ENCODE measurements at regions of chr15 and their contacts with region 1.

Region 1: DNA sequence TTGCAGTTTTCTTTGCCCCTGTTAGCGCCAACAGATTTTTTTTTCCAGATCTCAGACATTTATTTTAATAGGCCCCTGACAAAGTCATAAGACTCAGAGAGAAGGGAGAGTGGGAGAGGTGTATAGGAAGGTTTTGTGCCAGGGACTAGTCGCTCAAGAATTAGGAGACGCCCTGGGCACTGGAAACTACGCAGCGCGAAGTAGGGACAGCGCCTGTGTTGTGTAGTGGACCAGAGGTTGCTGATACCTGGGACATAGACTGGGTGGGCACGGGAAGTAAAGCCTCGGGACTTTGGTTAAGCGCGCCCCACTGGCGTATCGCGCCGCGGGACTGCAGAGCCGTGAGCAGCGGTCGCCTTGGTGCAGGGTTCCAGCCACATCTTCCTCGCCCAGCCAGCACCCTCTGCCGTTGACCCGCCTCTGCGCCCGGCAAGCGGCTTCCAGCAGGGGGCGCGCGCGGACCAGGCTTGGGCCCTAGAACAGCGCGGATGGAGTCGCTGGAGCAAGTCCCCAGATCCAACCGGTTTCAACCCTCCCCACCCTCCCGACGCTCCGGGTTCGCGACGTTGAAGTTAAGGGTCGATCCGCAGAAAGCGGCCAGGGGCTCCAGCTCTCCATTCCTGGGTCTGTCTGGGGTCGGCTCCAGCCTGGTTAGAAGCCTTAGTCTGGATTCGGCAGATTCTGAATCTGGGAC is 3.0 kb upstream of the ISLR2 start:
- DNase-seq: no peak
- H3K4me3 ChIP-seq: peak overlapping the region; percentile 49 to 64 (median 51)
- H3K27ac ChIP-seq: peak overlapping the region; percentile 44 to 66 (median 50)
- H3K4me1 ChIP-seq: peaks cover 35 to 45% (median 42%) of the 10 kb centered on the region in 4 donors
- H3K27me3 ChIP-seq: peaks cover 0 to 95% (median 49%) of the 10 kb centered on the region in 4 donors
- CTCF ChIP-seq: peak; percentile 96 to 99 (median 99)
- EP300 ChIP-seq: no peak
- POLR2A ChIP-seq: no peak

Region 2: DNA sequence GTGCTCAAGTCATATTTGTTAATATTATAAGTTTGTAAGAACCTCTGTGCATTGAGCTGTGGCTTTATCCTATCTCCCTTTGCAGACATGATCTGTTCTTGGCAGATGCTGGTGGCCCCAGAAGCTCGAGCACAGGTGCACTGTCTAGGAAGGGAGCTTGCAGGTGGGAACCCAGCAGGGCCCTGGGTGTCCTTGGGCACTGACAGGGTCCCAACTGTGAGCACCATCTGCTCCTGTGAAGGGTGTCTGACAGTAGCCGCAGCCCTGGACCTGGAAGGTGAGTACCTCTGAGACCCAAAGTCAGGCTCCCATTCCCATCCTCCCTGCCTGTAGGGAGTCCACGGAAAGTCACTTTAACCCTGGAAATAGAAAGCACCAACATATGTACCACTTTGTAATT is 686.8 kb before region 1 on chr15:
- intact Hi-C with region 1: no loop called
- DNase-seq: no peak
- H3K4me3 ChIP-seq: no peak overlapping the region
- H3K27ac ChIP-seq: no peak overlapping the region
- H3K4me1 ChIP-seq: no peaks in the 10 kb centered on the region
- H3K27me3 ChIP-seq: peaks cover 0 to 22% (median 0%) of the 10 kb centered on the region in 4 donors
- CTCF ChIP-seq: no peak
- EP300 ChIP-seq: no peak
- POLR2A ChIP-seq: no peak

Region 3: DNA sequence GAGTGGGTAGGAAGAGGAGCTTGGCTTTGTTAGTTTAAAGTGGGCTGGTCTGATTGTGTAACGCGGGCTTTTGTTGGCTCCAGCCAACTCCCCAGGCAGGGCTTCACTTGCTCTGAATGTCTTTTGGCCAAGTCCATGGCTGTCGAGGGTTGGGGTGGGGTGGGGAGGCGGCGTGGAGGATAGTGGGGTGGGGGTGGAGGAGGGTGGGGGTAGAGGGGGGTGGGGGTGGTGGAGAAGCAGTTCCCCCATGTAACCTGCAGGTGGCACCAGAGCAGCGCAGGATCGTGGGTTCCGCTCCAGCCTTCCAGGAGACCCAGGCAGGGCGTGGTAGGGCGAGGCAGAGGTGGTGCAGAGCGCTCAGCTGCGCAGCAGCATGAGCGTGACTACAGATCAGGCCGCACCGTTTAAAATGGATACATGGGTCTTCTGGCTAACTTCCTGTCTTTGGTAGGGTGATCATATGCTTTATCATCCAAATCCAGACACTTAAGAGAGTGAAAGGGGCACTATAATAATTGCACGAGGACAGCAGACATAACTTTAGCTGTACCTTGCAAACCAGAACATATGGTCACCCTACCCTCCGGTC is 73.4 kb before region 1 on chr15:
- intact Hi-C with region 1: loop called (anchors 5 kb)
- DNase-seq: peak; percentile 94
- H3K4me3 ChIP-seq: peak overlapping the region in 2 of 4 donors; percentile 13 to 31
- H3K27ac ChIP-seq: peak overlapping the region in 2 of 4 donors; percentile 30 to 41
- H3K4me1 ChIP-seq: peaks cover 19 to 46% (median 44%) of the 10 kb centered on the region in 4 donors
- H3K27me3 ChIP-seq: no peaks in the 10 kb centered on the region
- CTCF ChIP-seq: peak; percentile 49 to 91 (median 74)
- EP300 ChIP-seq: no peak
- POLR2A ChIP-seq: no peak

Region 4: DNA sequence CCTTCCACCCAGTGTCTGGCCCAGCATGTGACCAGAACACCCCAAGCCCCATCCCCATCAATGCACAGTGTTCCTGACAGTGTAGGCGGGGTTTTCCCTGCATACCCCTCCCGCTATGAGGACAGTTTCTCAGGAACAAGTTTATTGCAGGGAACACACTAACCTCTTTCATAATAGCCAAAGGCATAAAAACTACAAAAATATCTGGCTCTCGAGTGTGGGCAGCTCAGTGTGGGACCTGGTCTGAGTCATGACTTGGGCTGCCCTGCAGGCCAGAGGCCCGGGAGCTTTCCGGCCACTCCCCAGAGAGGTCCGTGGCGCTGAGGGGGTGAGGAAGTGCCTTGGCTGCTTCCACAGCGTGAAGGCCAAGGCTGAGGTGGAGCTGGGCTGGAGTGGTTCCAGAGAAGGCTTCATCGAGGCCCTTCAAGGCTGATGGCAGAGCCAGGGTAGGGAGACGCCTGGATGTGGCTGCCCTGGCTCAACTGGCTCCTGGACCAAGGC is 52.0 kb after region 1 on chr15:
- intact Hi-C with region 1: no loop called
- DNase-seq: no peak
- H3K4me3 ChIP-seq: no peak overlapping the region
- H3K27ac ChIP-seq: peak overlapping the region; percentile 37 to 64 (median 52)
- H3K4me1 ChIP-seq: peaks cover 43 to 69% (median 64%) of the 10 kb centered on the region in 4 donors
- H3K27me3 ChIP-seq: no peaks in the 10 kb centered on the region
- CTCF ChIP-seq: no peak
- EP300 ChIP-seq: no peak
- POLR2A ChIP-seq: no peak

Region 5: DNA sequence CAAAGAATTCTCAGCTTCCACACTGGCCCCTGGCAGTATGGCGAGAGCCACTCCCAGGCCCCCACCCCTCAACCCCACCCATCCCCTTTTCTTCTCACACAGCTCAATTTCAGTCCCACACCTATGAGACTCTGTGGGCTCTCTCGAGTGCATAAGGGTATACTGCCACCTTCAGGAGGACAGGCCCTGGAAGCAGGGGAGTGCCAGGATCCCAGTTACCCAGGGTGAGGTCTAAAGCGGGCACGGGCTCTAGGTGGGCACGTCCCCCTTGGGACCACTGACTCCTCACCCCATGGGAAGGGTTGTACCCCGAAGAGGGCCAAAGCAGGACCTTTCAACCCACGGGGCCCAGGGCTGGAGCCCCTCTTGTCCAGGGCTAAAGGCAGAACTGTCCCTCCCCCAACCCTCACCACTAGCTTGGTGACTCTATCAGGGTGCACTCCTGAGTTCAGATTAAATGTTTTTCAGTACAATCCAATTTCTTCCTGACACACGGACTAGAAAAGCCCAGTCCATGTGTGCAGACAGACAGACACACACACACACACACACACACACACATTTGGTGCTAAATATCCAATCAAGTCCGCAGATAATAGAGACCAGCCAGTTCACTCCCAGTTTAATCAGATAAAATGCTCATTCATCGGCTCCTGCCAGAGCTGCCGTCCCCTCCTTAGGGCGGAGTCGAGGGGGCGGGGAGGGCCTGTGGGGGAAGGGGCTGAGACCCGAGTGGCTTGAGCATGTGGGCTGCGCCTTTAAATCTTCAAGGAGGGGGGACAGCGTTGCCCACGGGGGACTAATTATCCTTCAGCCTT is 180.6 kb after region 1 on chr15:
- intact Hi-C with region 1: loop called (anchors 10 kb)
- DNase-seq: no peak
- H3K4me3 ChIP-seq: no peak overlapping the region
- H3K27ac ChIP-seq: no peak overlapping the region
- H3K4me1 ChIP-seq: no peaks in the 10 kb centered on the region
- H3K27me3 ChIP-seq: peaks cover 0 to 83% (median 5%) of the 10 kb centered on the region in 4 donors
- CTCF ChIP-seq: peak; percentile 57 to 69 (median 68)
- EP300 ChIP-seq: no peak
- POLR2A ChIP-seq: no peak

Region 6: GRCh38 chr15:74320325-74321247 is 193.2 kb after region 1 on chr15:
- intact Hi-C with region 1: loop called (anchors 2 kb)
- DNase-seq: no peak
- H3K4me3 ChIP-seq: no peak overlapping the region
- H3K27ac ChIP-seq: peak overlapping the region in 1 of 4 donors; percentile 62
- H3K4me1 ChIP-seq: peaks cover 46 to 52% (median 49%) of the 10 kb centered on the region in 4 donors
- H3K27me3 ChIP-seq: peaks cover 0 to 15% (median 0%) of the 10 kb centered on the region in 4 donors
- CTCF ChIP-seq: peak; percentile 35 to 57 (median 38)
- EP300 ChIP-seq: no peak
- POLR2A ChIP-seq: no peak

Measured in esophagus muscularis mucosa (tissue), 4 donors.